ENCODE measurements at regions of chr12 and their contacts with region 1.

Region 1: GRCh38 chr12:109093022-109093918 is at the start of gene ALKBH2:
- DNase-seq: peak; percentile 96
- ATAC-seq: peak; percentile 70
- H3K4me3 ChIP-seq: peak within 1 kb of the TSS; percentile 64 to 98 (median 85)
- H3K4me3 Mint-ChIP-seq: peak within 1 kb of the TSS; percentile 95
- H3K27ac ChIP-seq: peak within 1 kb of the TSS; percentile 58 to 78
- H3K27ac Mint-ChIP-seq: peak within 1 kb of the TSS; percentile 89
- H3K4me1 ChIP-seq: peaks cover 24 to 28% of the 10 kb centered on the region in 2 donors
- H3K4me1 Mint-ChIP-seq: peaks cover 34% of the 10 kb centered on the region
- H3K27me3 ChIP-seq: no peaks in the 10 kb centered on the region
- H3K27me3 Mint-ChIP-seq: no peaks in the 10 kb centered on the region
- CTCF ChIP-seq: peak; percentile 97
- total RNA-seq, gene ALKBH2: 14.5 and 14.6 TPM in 2 replicates

Region 2: DNA sequence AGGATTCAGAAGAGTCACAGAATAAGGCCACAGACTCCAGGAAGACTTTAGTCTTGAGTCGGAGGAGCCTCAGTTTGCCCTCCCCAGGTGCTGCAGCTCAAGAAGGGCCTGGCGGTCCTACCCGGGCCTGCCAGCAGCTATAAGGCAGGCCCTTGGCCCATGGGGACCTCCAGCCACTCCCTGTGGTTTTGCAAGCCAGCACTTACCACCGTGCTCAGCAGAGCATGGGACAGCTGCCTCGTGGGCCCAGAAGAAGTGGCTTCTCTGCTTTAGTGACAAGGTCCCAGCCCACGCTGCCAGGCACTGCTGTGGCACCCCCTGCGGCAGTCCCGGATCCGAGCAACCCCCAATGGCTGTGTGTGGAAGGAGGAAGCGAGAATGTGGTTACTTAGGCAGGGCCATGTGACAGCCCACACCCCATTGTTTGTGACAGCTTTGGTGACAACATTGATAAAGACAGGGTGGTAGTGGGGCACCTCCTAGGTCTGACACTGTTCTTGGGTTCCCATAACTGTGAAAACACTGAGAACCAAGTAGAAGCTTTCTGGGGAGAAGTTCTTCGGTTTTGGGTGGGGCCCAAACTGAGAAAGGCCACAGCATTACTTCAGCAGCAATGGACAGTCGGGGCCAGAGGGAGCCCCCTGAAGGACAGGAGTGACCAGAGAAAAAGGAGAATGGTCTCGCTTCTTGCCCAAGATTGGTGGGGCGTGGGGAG is 459.6 kb before region 1 on chr12 and contains the start of gene SELPLG:
- CTCF ChIA-PET with region 1: interaction called, 3 read pairs
- POLR2A ChIA-PET with region 1: no interaction called
- intact Hi-C with region 1: loop called (anchors 10 kb)
- DNase-seq: peak; percentile 98
- ATAC-seq: peak; percentile 75
- H3K4me3 ChIP-seq: peak within 1 kb of the TSS; percentile 62 to 87 (median 78)
- H3K4me3 Mint-ChIP-seq: peak within 1 kb of the TSS; percentile 99
- H3K27ac ChIP-seq: peak within 1 kb of the TSS; percentile 92 to 95
- H3K27ac Mint-ChIP-seq: peak within 1 kb of the TSS; percentile 100
- H3K4me1 ChIP-seq: peaks cover 78 to 88% of the 10 kb centered on the region in 2 donors
- H3K4me1 Mint-ChIP-seq: peaks cover 89% of the 10 kb centered on the region
- H3K27me3 ChIP-seq: no peaks in the 10 kb centered on the region
- H3K27me3 Mint-ChIP-seq: no peaks in the 10 kb centered on the region
- CTCF ChIP-seq: peak; percentile 41
- total RNA-seq, gene SELPLG: 6.1 and 6.2 TPM in 2 replicates

Region 3: DNA sequence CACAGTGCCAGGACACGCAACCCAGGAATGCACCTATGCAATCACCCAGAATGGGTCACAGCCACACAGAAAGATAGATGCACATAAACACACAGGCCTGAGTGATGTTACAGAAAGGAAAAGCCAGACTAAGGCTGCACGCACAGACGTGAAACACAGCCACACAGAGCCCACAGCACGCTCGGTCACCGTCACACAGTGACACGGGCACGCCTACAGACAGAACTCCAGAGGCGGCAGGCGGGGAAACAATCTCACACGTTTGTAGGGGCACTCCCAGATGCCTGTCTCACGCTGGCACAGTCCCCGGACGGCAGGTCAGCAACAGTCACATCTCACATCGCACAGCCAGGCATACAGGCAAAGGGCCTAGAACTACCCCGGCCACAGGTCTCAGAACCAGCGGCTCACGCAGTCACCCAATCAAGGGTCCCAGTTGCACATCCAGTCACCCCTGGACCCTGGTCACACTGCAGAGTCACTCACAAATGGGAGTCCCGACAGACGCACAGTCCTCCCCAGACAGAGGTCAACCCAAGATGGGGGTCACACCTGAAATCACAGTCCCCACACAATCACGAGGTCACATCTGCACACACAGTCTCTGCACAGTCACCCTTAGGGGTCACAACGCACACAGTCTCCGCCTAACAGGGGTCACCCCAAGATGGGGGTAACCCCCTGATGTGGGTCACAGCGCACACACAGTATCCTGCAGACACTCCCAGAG is 236.7 kb before region 1 on chr12:
- CTCF ChIA-PET with region 1: no interaction called
- POLR2A ChIA-PET with region 1: no interaction called
- intact Hi-C with region 1: loop called (anchors 1 kb)
- DNase-seq: peak; percentile 59
- ATAC-seq: peak; percentile 2
- H3K4me3 ChIP-seq: peak overlapping the region; percentile 43 to 76 (median 71)
- H3K4me3 Mint-ChIP-seq: peak overlapping the region; percentile 99
- H3K27ac ChIP-seq: peak overlapping the region in 1 of 2 donors; percentile 56
- H3K27ac Mint-ChIP-seq: peak overlapping the region; percentile 96
- H3K4me1 ChIP-seq: peaks cover 29 to 44% of the 10 kb centered on the region in 2 donors
- H3K4me1 Mint-ChIP-seq: peaks cover 52% of the 10 kb centered on the region
- H3K27me3 ChIP-seq: peaks cover 0 to 4% (median 0%) of the 10 kb centered on the region in 4 experiments
- H3K27me3 Mint-ChIP-seq: no peaks in the 10 kb centered on the region
- CTCF ChIP-seq: no peak

Region 4: DNA sequence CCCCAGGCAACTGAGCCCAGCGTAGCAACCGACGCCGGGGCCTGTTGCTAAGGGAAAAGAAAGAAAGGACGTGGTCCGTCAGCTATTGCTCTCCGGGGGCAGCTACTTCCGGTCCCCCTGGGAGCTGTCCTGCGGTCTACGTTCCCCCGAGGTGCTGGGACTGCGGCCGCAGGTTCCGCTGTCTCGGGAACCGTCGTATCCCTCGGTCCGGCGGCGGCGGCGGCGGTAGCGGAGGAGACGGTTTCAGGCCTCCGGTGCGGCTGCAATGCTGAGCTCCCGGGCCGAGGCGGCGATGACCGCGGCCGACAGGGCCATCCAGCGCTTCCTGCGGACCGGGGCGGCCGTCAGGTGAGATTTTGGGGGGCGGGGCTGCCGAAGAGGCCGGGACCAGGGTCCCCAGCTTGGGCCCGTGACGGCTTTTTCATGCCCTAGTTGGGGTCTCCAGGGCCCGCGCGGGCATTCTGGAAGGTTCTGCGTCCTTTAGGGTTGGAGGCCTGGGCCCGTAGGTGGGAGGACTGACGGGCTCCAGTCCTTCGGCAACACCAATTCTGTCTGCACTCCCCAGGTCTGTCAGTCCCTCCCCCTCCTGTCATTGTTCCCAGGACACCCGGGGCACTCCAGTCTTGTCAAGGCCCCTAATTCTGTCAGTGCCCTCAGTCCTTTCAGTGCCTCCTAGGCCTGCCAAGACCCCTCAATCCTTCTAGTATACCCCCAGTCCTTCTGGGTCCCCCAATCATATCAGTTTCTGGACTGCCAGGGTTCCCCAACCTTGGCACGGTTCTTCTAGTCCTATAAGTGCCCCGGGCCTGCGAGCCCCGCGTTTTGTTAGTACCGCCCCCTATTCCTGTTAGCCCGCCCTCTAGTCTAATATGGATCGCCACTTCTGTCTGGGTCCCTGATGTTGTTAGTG is 40.6 kb before region 1 on chr12 and contains the start of gene USP30:
- CTCF ChIA-PET with region 1: interaction called, 7 read pairs
- POLR2A ChIA-PET with region 1: no interaction called
- intact Hi-C with region 1: loop called (anchors 1 kb)
- DNase-seq: peak; percentile 92
- ATAC-seq: peak; percentile 86
- H3K4me3 ChIP-seq: peak within 1 kb of the TSS; percentile 75 to 94 (median 89)
- H3K4me3 Mint-ChIP-seq: peak within 1 kb of the TSS; percentile 90
- H3K27ac ChIP-seq: peak within 1 kb of the TSS; percentile 78 to 82
- H3K27ac Mint-ChIP-seq: peak within 1 kb of the TSS; percentile 92
- H3K4me1 ChIP-seq: peaks cover 8 to 24% of the 10 kb centered on the region in 2 donors
- H3K4me1 Mint-ChIP-seq: peaks cover 22% of the 10 kb centered on the region
- H3K27me3 ChIP-seq: no peaks in the 10 kb centered on the region
- H3K27me3 Mint-ChIP-seq: no peaks in the 10 kb centered on the region
- CTCF ChIP-seq: no peak
- total RNA-seq, gene USP30: 24.7 and 32.5 TPM in 2 replicates

Region 5: DNA sequence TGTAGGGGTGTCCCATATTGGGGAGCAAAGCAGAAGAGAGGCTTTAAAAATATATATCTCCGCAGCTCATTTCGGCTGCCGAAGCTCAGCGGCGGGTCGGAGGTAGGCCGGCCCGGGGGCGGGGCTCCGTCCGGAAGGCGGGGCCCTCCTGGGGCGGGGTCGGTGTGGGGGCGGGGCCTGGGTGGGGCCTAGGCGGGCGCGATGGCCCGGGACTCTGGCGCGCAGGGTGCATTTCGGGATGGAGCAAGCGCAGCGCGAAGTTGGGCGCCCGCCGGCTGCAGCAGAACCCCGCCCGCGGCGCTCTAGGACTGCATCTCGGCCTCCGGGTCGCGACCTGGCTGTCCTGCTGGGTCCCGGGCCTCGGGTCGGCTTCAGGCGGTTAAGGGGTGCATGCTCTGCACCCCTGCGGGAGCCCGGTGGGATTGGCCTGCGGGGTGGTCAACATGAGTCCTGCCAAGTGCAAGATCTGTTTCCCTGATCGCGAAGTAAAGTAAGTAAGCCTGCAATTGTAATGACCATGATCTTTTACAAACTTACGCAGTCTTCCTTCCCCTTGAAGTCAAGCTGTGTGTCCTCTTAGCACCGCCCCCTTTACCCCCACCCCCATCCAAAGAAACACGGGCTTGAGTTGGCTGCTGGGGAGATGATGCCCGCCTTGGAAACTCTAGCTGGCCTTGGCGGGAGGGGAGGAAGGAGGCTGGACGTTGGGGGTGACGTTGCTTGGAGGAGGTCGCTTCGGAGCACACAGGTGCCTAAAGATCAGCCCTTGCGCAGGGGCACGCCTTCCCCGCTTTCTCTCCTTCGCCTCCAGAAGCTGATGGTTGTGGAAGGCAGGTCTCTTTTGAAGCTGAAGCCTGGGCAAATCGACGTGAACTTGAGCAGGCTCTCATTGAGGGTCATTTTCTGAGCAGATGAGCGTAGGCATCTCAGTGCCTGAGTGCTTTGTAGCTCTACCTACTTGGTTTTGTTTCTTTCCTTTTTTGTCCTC is 61.5 kb after region 1 on chr12:
- CTCF ChIA-PET with region 1: no interaction called
- POLR2A ChIA-PET with region 1: no interaction called
- intact Hi-C with region 1: loop called (anchors 1 kb)
- DNase-seq: peak; percentile 83
- ATAC-seq: peak; percentile 96
- H3K4me3 ChIP-seq: peak overlapping the region; percentile 66 to 81 (median 73)
- H3K4me3 Mint-ChIP-seq: peak overlapping the region; percentile 99
- H3K27ac ChIP-seq: peak overlapping the region; percentile 26 to 69
- H3K27ac Mint-ChIP-seq: peak overlapping the region; percentile 94
- H3K4me1 ChIP-seq: peaks cover 11 to 17% of the 10 kb centered on the region in 2 donors
- H3K4me1 Mint-ChIP-seq: peaks cover 22% of the 10 kb centered on the region
- H3K27me3 ChIP-seq: no peaks in the 10 kb centered on the region
- H3K27me3 Mint-ChIP-seq: peaks cover 3% of the 10 kb centered on the region
- CTCF ChIP-seq: no peak

Region 6: GRCh38 chr12:109910969-109911348 is 817.7 kb after region 1 on chr12:
- CTCF ChIA-PET with region 1: no interaction called
- POLR2A ChIA-PET with region 1: no interaction called
- intact Hi-C with region 1: no loop called
- DNase-seq: no peak
- ATAC-seq: no peak
- H3K4me3 ChIP-seq: no peak overlapping the region
- H3K4me3 Mint-ChIP-seq: no peak overlapping the region
- H3K27ac ChIP-seq: no peak overlapping the region
- H3K27ac Mint-ChIP-seq: no peak overlapping the region
- H3K4me1 ChIP-seq: no peaks in the 10 kb centered on the region
- H3K4me1 Mint-ChIP-seq: no peaks in the 10 kb centered on the region
- H3K27me3 ChIP-seq: no peaks in the 10 kb centered on the region
- H3K27me3 Mint-ChIP-seq: no peaks in the 10 kb centered on the region
- CTCF ChIP-seq: no peak

Measured in B cell (primary cell).